ENCODE measurements at regions of chr5 and their contacts with region 1.

Region 1: GRCh38 chr5:79030663-79031484 is 38.6 kb downstream of the DMGDH start:
- DNase-seq: no peak
- H3K4me3 ChIP-seq: no peak overlapping the region
- H3K27ac ChIP-seq: no peak overlapping the region
- H3K4me1 ChIP-seq: no peaks in the 10 kb centered on the region
- H3K27me3 ChIP-seq: no peaks in the 10 kb centered on the region
- CTCF ChIP-seq: no peak
- EP300 ChIP-seq: no peak
- POLR2A ChIP-seq: no peak

Region 2: GRCh38 chr5:78886341-78887230 is 144.3 kb before region 1 on chr5:
- in situ Hi-C with region 1: no loop called
- intact Hi-C with region 1: no loop called
- DNase-seq: no peak
- H3K4me3 ChIP-seq: no peak overlapping the region
- H3K27ac ChIP-seq: no peak overlapping the region
- H3K4me1 ChIP-seq: peaks cover 0 to 5% (median 0%) of the 10 kb centered on the region in 4 donors
- H3K27me3 ChIP-seq: no peaks in the 10 kb centered on the region
- CTCF ChIP-seq: peak; percentile 34 to 55 (median 45)
- EP300 ChIP-seq: no peak
- POLR2A ChIP-seq: no peak

Region 3: GRCh38 chr5:79464695-79465332 is 433.9 kb after region 1 on chr5:
- in situ Hi-C with region 1: loop called in 1 of 4 experiments (anchors 10 kb)
- intact Hi-C with region 1: no loop called
- DNase-seq: no peak
- H3K4me3 ChIP-seq: no peak overlapping the region
- H3K27ac ChIP-seq: no peak overlapping the region
- H3K4me1 ChIP-seq: no peaks in the 10 kb centered on the region
- H3K27me3 ChIP-seq: no peaks in the 10 kb centered on the region
- CTCF ChIP-seq: peak; percentile 56 to 63 (median 59)
- EP300 ChIP-seq: no peak
- POLR2A ChIP-seq: no peak

Measured in transverse colon (tissue), 4 donors.